ENCODE measurements at regions of chr18 and their contacts with region 1.

Region 1: DNA sequence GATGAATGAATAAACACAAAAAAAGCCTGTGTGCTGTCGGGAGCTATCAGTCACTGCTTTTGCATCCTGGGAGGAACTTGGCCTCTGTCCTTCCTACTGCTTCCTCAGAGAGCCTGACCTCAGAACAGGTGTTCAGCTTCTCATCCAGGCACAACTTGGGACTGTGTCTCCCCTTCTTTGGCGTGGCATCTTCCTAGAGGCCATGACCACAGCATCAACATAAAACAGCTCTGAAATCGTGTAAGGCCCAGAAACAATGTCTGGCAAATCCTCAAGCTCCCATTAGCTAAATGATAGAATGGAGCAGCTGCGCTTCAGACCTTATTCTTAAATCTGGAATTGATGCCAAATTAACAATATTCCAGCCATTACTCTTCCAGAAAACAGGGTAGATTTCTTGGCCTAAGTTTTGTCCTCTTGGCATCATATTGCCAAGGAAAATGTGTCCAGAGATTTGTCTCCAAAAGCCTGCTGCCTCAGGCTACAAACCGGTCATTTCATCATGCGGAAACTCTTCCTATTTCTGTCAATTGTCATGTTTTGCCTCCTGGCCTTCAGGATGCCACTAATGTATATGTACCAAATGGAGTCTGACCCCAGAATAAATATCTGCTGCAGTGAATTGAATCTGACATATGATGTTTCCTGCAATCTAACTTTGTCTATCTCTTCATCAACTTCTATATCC is 53.2 kb upstream of the RAB27B start:
- DNase-seq: no peak

Region 2: DNA sequence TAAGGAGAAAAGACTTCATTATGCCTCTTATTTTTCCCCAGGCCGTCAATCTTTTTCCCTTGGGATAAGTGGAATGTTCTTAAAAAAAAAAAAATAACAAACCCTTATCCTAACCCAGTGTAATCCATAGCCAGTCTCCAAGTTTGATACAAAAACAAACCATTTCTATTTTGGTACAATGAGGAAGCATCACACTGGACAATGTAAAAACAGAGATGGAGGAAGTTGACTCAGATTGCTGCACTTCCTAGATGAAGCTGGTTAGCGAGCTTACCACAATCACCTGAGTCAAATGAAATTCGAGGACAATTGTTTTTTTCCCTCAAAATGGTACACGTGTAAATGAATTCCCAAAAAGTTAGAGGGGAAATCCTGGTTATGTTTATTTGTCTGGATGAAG is 553.2 kb after region 1 on chr18:
- intact Hi-C with region 1: loop called in 1 of 2 experiments (anchors 5 kb)
- DNase-seq: no peak

Measured in posterior vena cava (tissue), 2 donors.